A673 (cell line): ENCODE measurements at regions of chr13 and their contacts with region 1.

Region 1: GRCh38 chr13:98613591-98613990 is 36.7 kb upstream of the STK24 start:
- DNase-seq: peak; percentile 50
- H3K4me3 ChIP-seq: no peak overlapping the region
- H3K27ac ChIP-seq: no peak overlapping the region
- H3K4me1 ChIP-seq: peaks cover 10% of the 10 kb centered on the region
- H3K27me3 ChIP-seq: no peaks in the 10 kb centered on the region
- CTCF ChIP-seq: no peak

Region 2: DNA sequence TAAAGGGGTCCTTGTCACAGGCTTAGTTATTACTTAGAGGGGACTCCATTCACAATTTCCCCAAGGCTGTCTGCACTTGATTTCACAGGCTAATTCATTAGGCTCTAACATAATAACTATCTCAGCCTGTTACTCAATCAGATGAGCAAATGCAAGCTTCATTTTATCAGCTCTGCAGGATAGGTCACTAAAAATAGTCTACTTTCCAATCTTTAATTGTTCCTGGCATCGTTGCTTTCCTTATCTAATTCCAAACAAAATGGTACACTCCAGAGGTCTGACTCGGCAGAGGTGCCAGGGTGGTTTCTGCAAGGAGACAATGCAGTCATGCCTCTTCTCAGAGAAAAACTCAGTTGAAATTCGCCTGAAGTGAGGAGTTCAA is 208.6 kb after region 1 on chr13:
- CTCF ChIA-PET with region 1: no interaction called
- POLR2A ChIA-PET with region 1: no interaction called
- intact Hi-C with region 1: no loop called
- DNase-seq: no peak
- H3K4me3 ChIP-seq: no peak overlapping the region
- H3K27ac ChIP-seq: peak overlapping the region; percentile 86
- H3K4me1 ChIP-seq: peaks cover 42% of the 10 kb centered on the region
- H3K27me3 ChIP-seq: no peaks in the 10 kb centered on the region
- CTCF ChIP-seq: no peak

Region 3: GRCh38 chr13:99501184-99501847 is 887.7 kb after region 1 on chr13 and contains the start of gene TM9SF2:
- CTCF ChIA-PET with region 1: no interaction called
- POLR2A ChIA-PET with region 1: interaction called, 17 read pairs
- intact Hi-C with region 1: no loop called
- DNase-seq: peak; percentile 98
- H3K4me3 ChIP-seq: peak within 1 kb of the TSS; percentile 88
- H3K27ac ChIP-seq: peak within 1 kb of the TSS; percentile 75
- H3K4me1 ChIP-seq: peaks cover 23% of the 10 kb centered on the region
- H3K27me3 ChIP-seq: no peaks in the 10 kb centered on the region
- CTCF ChIP-seq: no peak
- total RNA-seq, gene TM9SF2: 89.8 and 96.3 TPM in 2 replicates